Calu3 (cell line): ENCODE measurements at regions of chr6 and their contacts with region 1.

Region 1: DNA sequence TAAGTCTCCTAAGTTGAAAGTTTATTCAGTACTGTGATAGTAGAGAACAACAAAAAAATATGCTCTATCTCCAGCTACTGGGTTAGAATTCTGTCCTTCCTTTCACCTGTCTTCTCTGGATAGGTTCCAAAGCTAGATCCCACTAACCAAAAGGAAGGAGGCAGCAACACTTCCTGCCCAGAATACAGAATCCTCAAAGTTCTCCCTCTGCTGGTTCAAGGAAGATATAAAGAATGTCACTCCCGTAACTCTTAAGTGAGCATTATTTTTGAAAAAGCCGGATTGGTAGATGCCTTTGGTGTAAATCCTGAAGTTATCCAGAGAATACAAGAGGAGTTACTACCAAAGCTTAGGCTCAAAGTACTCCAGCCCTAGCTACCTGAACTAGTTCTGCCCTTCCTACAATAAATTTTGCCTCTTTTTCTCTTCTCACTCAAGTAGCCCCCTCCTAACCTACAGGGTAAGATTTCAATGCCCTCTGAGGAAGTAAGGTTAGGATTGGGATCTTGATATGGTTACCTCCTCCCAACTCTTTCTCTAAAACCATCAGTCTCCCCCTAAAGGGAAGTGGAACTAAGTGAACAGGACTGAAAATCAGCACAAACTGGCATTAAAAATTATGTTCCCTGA is 26.0 kb upstream of the CRIP3 start:
- DNase-seq: peak; percentile 55
- H3K4me3 Mint-ChIP-seq: no peak overlapping the region
- H3K27ac Mint-ChIP-seq: no peak overlapping the region
- H3K4me1 Mint-ChIP-seq: peaks cover 18% of the 10 kb centered on the region
- H3K27me3 Mint-ChIP-seq: no peaks in the 10 kb centered on the region
- CTCF ChIP-seq: peak; percentile 34

Region 2: DNA sequence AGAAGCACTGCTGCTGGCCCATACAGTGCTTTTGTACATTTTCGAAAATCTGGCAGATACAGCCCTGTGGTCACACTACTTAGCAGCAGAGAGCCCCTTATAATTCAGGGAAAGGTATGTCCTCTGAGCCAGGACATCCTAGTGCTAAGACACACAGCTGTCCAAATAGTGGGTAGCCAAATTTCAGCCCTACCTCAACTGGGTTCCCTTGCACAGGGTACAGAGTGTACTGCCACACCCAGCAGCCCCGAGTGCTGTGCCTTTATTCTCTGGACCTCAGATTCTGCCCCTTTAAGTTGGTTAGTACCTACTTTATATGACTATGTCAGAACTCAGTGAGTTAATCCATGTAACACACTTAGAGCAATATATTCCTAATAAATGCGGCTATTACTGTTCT is 659.8 kb before region 1 on chr6:
- CTCF ChIA-PET with region 1: no interaction called
- intact Hi-C with region 1: no loop called
- DNase-seq: no peak
- H3K4me3 Mint-ChIP-seq: no peak overlapping the region
- H3K27ac Mint-ChIP-seq: no peak overlapping the region
- H3K4me1 Mint-ChIP-seq: no peaks in the 10 kb centered on the region
- H3K27me3 Mint-ChIP-seq: no peaks in the 10 kb centered on the region
- CTCF ChIP-seq: no peak

Region 3: GRCh38 chr6:42907336-42907735 is 427.2 kb before region 1 on chr6:
- CTCF ChIA-PET with region 1: interaction called, 4 read pairs
- intact Hi-C with region 1: loop called (anchors 5 kb)
- DNase-seq: no peak
- H3K4me3 Mint-ChIP-seq: no peak overlapping the region
- H3K27ac Mint-ChIP-seq: no peak overlapping the region
- H3K4me1 Mint-ChIP-seq: peaks cover 5% of the 10 kb centered on the region
- H3K27me3 Mint-ChIP-seq: peaks cover 31% of the 10 kb centered on the region
- CTCF ChIP-seq: no peak

Region 4: GRCh38 chr6:43263314-43264178 is 71.0 kb before region 1 on chr6:
- CTCF ChIA-PET with region 1: interaction called, 53 read pairs
- intact Hi-C with region 1: loop called (anchors 1 kb)
- DNase-seq: peak; percentile 94
- H3K4me3 Mint-ChIP-seq: no peak overlapping the region
- H3K27ac Mint-ChIP-seq: no peak overlapping the region
- H3K4me1 Mint-ChIP-seq: peaks cover 10% of the 10 kb centered on the region
- H3K27me3 Mint-ChIP-seq: peaks cover 25% of the 10 kb centered on the region
- CTCF ChIP-seq: peak; percentile 81

Region 5: GRCh38 chr6:43308101-43308989 is 26.2 kb before region 1 on chr6 and contains the start of gene CRIP3:
- CTCF ChIA-PET with region 1: interaction called, 38 read pairs
- intact Hi-C with region 1: no loop called
- DNase-seq: peak; percentile 74
- H3K4me3 Mint-ChIP-seq: peak within 1 kb of the TSS; percentile 74
- H3K27ac Mint-ChIP-seq: no peak within 1 kb of the TSS
- H3K4me1 Mint-ChIP-seq: peaks cover 10% of the 10 kb centered on the region
- H3K27me3 Mint-ChIP-seq: no peaks in the 10 kb centered on the region
- CTCF ChIP-seq: peak; percentile 74
- total RNA-seq, gene CRIP3: 2.3 and 5.4 TPM in 2 replicates